ENCODE measurements at regions of chr12 and their contacts with region 1.

Region 1: DNA sequence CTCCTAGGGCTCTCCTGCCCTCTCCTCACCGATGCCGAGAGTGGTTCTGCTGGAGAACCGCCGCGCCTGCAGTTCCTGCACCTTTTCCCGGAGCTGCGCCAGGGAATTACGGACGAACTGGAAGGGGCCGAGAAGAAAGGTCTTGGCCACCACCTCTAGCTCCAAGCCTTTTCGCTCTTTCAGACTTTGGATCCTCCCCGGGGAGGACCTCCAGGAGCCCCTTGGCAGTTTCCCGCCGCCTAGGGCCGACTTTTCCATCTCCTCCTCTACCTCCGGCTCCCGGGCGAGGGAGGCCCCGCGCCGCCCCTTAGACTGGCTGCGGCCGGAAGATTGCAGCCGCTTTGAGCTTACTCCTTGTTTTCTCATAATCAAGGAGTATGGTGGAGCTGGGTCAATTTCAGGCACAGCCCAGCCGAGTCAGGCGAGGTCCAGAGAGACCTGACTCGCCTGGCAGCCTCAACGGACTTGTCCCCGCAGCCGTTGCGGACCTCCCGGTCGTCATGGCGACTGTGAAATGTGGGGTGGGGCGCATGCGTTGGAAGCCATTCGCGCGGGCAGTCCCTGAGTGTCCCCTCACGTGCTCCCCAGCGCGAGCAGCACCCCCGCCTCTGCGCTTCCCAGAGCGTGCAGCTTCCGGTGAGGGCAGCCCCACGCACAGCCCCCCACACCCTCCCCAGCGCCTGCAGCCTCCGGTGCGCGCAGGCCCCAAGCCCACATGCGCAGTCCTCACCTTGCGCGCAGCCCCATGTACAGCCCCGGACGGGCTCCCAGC is at the start of gene DPY19L2:
- DNase-seq: peak; percentile 12 to 73
- H3K4me3 ChIP-seq: peak within 1 kb of the TSS; percentile 62 to 75
- H3K27ac ChIP-seq: peak within 1 kb of the TSS; percentile 53 to 71
- H3K4me1 ChIP-seq: no peaks in the 10 kb centered on the region
- H3K27me3 ChIP-seq: no peaks in the 10 kb centered on the region
- CTCF ChIP-seq: no peak
- total RNA-seq, gene DPY19L2: 3.2 TPM

Region 2: GRCh38 chr12:63779498-63780481 is 111.6 kb after region 1 on chr12 and contains the start of gene RXYLT1:
- intact Hi-C with region 1: loop called (anchors 10 kb)
- DNase-seq: peak; percentile 16 to 89
- H3K4me3 ChIP-seq: peak within 1 kb of the TSS; percentile 73 to 84
- H3K27ac ChIP-seq: peak within 1 kb of the TSS; percentile 86
- H3K4me1 ChIP-seq: peaks cover 0 to 7% of the 10 kb centered on the region in 2 donors
- H3K27me3 ChIP-seq: no peaks in the 10 kb centered on the region
- CTCF ChIP-seq: no peak
- total RNA-seq, gene RXYLT1: 1.5 TPM

Region 3: GRCh38 chr12:63930971-63931370 is 262.8 kb after region 1 on chr12:
- intact Hi-C with region 1: no loop called
- DNase-seq: no peak
- H3K4me3 ChIP-seq: no peak overlapping the region
- H3K27ac ChIP-seq: no peak overlapping the region
- H3K4me1 ChIP-seq: no peaks in the 10 kb centered on the region
- H3K27me3 ChIP-seq: no peaks in the 10 kb centered on the region
- CTCF ChIP-seq: no peak